HCT116 (cell line): ENCODE measurements at regions of chr13 and their contacts with region 1.

Region 1: GRCh38 chr13:22061351-22061805 is 390.5 kb downstream of the FGF9 start:
- DNase-seq: no peak
- ATAC-seq: no peak
- H3K4me3 ChIP-seq: no peak overlapping the region
- H3K27ac ChIP-seq: no peak overlapping the region
- H3K4me1 ChIP-seq: no peaks in the 10 kb centered on the region
- H3K27me3 ChIP-seq: no peaks in the 10 kb centered on the region
- CTCF ChIP-seq: no peak
- POLR2A ChIP-seq: no peak
- RAD21 ChIP-seq: no peak

Region 2: GRCh38 chr13:21998279-21998990 is 62.9 kb before region 1 on chr13:
- CTCF ChIA-PET with region 1: no interaction called
- POLR2A ChIA-PET with region 1: no interaction called
- RAD21 ChIA-PET with region 1: no interaction called
- intact Hi-C with region 1: no loop called
- DNase-seq: no peak
- ATAC-seq: no peak
- H3K4me3 ChIP-seq: no peak overlapping the region
- H3K27ac ChIP-seq: no peak overlapping the region
- H3K4me1 ChIP-seq: no peaks in the 10 kb centered on the region
- H3K27me3 ChIP-seq: no peaks in the 10 kb centered on the region
- CTCF ChIP-seq: 0 out of 6 replicates have a peak, but pooled peaks of 1 of the 3 experiments have one; percentile 1
- POLR2A ChIP-seq: no peak
- RAD21 ChIP-seq: no peak

Region 3: GRCh38 chr13:22076658-22077057 is 15.3 kb after region 1 on chr13:
- CTCF ChIA-PET with region 1: no interaction called
- POLR2A ChIA-PET with region 1: no interaction called
- RAD21 ChIA-PET with region 1: no interaction called
- intact Hi-C with region 1: loop called (anchors 1 kb)
- DNase-seq: no peak
- ATAC-seq: no peak
- H3K4me3 ChIP-seq: no peak overlapping the region
- H3K27ac ChIP-seq: no peak overlapping the region
- H3K4me1 ChIP-seq: no peaks in the 10 kb centered on the region
- H3K27me3 ChIP-seq: no peaks in the 10 kb centered on the region
- CTCF ChIP-seq: no peak
- POLR2A ChIP-seq: no peak
- RAD21 ChIP-seq: no peak

Region 4: GRCh38 chr13:22964245-22964966 is 903.0 kb after region 1 on chr13:
- CTCF ChIA-PET with region 1: no interaction called
- POLR2A ChIA-PET with region 1: no interaction called
- RAD21 ChIA-PET with region 1: no interaction called
- intact Hi-C with region 1: no loop called
- DNase-seq: no peak
- ATAC-seq: no peak
- H3K4me3 ChIP-seq: no peak overlapping the region
- H3K27ac ChIP-seq: no peak overlapping the region
- H3K4me1 ChIP-seq: peaks cover 5 to 7% of the 10 kb centered on the region in 2 experiments; a peak in 2 of 4 replicates
- H3K27me3 ChIP-seq: no peaks in the 10 kb centered on the region
- CTCF ChIP-seq: no peak
- POLR2A ChIP-seq: no peak
- RAD21 ChIP-seq: no peak